ENCODE measurements at regions of chr5 and their contacts with region 1.

Region 1: DNA sequence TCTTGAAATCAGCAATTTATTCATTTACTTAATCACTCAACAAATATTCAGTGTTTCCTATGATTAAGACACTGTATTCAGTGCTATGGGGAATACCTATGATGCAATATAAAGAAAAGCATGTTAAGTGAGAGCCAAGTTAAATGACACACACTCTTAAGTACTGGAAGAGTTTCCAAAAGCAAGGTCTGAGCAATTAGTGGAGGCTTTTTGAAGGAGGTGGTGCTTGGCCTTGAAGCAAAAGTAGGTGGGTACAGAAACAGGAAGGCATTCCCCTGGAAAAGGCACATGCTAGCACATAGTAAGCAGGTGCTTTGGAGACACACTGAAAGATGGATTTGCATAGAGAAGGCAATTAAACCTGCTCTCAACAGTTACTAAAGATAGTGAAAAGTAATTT is 4.0 kb downstream of the TSLP start:
- DNase-seq: peak; percentile 87
- ATAC-seq: peak; percentile 90
- H3K4me3 ChIP-seq: no peak overlapping the region
- H3K27ac ChIP-seq: no peak overlapping the region
- H3K4me1 ChIP-seq: peaks cover 15% of the 10 kb centered on the region
- H3K27me3 ChIP-seq: no peaks in the 10 kb centered on the region
- CTCF ChIP-seq: no peak

Region 2: GRCh38 chr5:110580625-110581024 is 494.9 kb before region 1 on chr5:
- CTCF ChIA-PET with region 1: no interaction called
- POLR2A ChIA-PET with region 1: no interaction called
- intact Hi-C with region 1: no loop called
- DNase-seq: no peak
- ATAC-seq: no peak
- H3K4me3 ChIP-seq: no peak overlapping the region
- H3K27ac ChIP-seq: no peak overlapping the region
- H3K4me1 ChIP-seq: no peaks in the 10 kb centered on the region
- H3K27me3 ChIP-seq: peaks cover 16% of the 10 kb centered on the region; the same call in 1 of the 2 replicates
- CTCF ChIP-seq: no peak

Region 3: DNA sequence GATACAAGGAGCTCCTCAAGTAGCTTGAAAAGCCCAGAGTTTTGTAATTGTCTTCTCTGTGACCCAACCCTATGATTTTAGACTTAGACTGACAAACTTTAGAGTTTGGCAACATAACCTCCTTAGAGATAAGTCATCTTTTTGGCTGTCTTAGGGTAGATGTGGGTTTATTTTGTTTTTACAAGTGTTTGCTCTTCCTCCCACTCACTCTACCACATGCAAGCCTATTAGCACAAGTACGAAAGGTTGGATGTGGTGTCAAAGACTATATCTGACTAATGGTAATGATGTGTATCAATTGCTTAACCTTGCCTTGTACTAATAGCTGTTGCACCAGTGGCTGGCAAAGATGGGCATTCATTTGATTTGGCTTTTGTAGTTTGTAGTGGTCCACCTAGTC is 290.2 kb before region 1 on chr5:
- CTCF ChIA-PET with region 1: no interaction called
- POLR2A ChIA-PET with region 1: no interaction called
- intact Hi-C with region 1: loop called (anchors 5 kb)
- DNase-seq: peak; percentile 96
- ATAC-seq: peak; percentile 93
- H3K4me3 ChIP-seq: peak overlapping the region; percentile 3; the same call in 1 of the 2 replicates
- H3K27ac ChIP-seq: peak overlapping the region; percentile 92
- H3K4me1 ChIP-seq: peaks cover 22% of the 10 kb centered on the region
- H3K27me3 ChIP-seq: no peaks in the 10 kb centered on the region
- CTCF ChIP-seq: no peak

Region 4: GRCh38 chr5:110899566-110900412 is 175.7 kb before region 1 on chr5:
- CTCF ChIA-PET with region 1: no interaction called
- POLR2A ChIA-PET with region 1: no interaction called
- intact Hi-C with region 1: loop called (anchors 1 kb)
- DNase-seq: peak; percentile 92
- ATAC-seq: peak; percentile 72
- H3K4me3 ChIP-seq: peak overlapping the region; percentile 22; the same call in 1 of the 2 replicates
- H3K27ac ChIP-seq: peak overlapping the region; percentile 96
- H3K4me1 ChIP-seq: peaks cover 39% of the 10 kb centered on the region
- H3K27me3 ChIP-seq: no peaks in the 10 kb centered on the region
- CTCF ChIP-seq: no peak

Region 5: DNA sequence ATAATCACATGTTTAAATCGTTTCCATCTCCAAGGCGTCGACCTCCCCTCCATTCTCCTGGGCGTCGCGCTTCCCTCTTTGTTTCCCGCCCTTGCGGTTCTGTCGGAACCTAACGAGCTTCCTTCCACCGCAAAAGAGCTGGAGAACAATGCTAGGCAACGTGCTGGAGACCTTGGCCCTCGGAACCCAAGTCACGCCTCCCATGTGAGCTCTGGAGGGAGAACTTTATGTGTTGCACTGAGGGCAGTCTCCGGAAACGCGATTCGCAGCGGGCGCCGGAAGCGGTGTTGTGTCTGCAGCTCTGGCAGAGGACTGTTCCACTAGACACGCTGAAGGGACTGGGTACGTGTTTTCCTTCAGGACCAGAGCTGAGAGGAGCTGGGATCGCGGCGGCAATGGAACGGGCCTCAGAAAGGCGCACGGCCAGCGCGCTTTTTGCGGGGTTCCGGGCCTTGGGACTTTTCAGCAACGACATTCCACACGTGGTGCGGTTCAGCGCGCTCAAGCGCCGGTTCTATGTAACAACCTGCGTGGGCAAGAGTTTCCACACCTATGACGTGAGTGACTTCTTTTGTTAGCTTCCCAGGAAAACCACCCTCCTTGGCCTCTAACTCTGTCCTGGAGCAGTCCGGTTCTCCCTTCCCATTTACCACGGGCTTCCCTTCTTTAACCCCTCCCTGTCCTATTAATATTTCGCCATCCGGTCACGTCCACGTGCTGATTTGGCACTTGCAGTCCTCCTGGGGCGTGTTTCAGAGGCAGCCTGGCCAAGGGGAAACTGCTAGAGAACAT is 16.7 kb after region 1 on chr5 and contains the start of gene WDR36:
- CTCF ChIA-PET with region 1: no interaction called
- POLR2A ChIA-PET with region 1: no interaction called
- intact Hi-C with region 1: loop called (anchors 2 kb)
- DNase-seq: peak; percentile 93
- ATAC-seq: peak; percentile 89
- H3K4me3 ChIP-seq: peak within 1 kb of the TSS; percentile 95
- H3K27ac ChIP-seq: peak within 1 kb of the TSS; percentile 65
- H3K4me1 ChIP-seq: peaks cover 16% of the 10 kb centered on the region
- H3K27me3 ChIP-seq: no peaks in the 10 kb centered on the region
- CTCF ChIP-seq: no peak
- total RNA-seq, gene WDR36: 38.2 and 44.7 TPM in 2 replicates